ENCODE measurements at regions of chr9 and their contacts with region 1.

Region 1: DNA sequence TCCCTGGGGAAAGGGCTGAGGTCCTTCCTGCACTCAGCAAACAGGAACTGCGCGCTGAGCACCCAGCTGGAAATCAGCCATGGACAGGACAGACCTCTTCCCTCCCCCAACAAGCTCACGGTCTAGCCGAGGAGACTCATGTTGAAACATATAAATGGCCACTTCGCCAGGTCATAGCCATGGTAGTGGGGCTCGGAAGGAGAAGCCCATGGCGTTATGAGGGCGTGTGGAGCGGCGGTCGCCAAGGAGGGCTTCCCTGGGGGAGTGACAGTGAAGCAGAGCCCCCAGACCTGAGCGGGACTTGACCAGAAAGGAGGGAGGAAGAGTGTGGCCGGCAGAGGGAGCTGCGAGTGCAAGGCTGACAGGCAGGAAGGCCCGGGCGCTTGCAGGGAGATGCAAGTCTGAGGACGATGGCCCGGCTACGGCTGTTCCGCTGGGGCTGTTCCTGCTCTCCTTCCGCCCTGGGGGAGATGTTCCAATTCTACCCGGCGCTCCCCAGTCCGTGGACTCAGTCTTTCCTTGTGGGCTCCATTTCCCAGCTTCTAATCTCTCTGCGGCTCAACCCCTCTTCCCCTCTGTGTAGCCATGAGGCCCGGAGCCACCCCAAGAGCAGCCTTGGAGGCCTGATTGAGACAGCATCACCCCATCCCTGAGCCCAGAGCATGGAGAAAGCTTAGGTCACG is 43.9 kb upstream of the PRRC2B start:
- DNase-seq: peak; percentile 86 to 93 (median 90)
- ATAC-seq: peak; percentile 86
- H3K4me3 ChIP-seq: no peak overlapping the region
- H3K27ac ChIP-seq: no peak overlapping the region
- H3K4me1 ChIP-seq: peaks cover 9% of the 10 kb centered on the region
- H3K27me3 ChIP-seq: no peaks in the 10 kb centered on the region
- CTCF ChIP-seq: peak; percentile 70 to 91 (median 84)
- POLR2A ChIP-seq: no peak

Region 2: GRCh38 chr9:131310833-131311554 is 39.0 kb before region 1 on chr9:
- intact Hi-C with region 1: no loop called
- DNase-seq: peak in 1 of 4 donors; percentile 12
- ATAC-seq: no peak
- H3K4me3 ChIP-seq: no peak overlapping the region
- H3K27ac ChIP-seq: no peak overlapping the region
- H3K4me1 ChIP-seq: no peaks in the 10 kb centered on the region
- H3K27me3 ChIP-seq: no peaks in the 10 kb centered on the region
- CTCF ChIP-seq: no peak
- POLR2A ChIP-seq: no peak

Region 3: GRCh38 chr9:131478421-131478868 is 128.4 kb after region 1 on chr9:
- intact Hi-C with region 1: loop called (anchors 5 kb)
- DNase-seq: peak; percentile 42 to 70 (median 50)
- ATAC-seq: no peak
- H3K4me3 ChIP-seq: no peak overlapping the region
- H3K27ac ChIP-seq: no peak overlapping the region
- H3K4me1 ChIP-seq: no peaks in the 10 kb centered on the region
- H3K27me3 ChIP-seq: no peaks in the 10 kb centered on the region
- CTCF ChIP-seq: peak; percentile 17 to 60 (median 34)
- POLR2A ChIP-seq: no peak